ENCODE measurements at regions of chr4 and their contacts with region 1.

Region 1: DNA sequence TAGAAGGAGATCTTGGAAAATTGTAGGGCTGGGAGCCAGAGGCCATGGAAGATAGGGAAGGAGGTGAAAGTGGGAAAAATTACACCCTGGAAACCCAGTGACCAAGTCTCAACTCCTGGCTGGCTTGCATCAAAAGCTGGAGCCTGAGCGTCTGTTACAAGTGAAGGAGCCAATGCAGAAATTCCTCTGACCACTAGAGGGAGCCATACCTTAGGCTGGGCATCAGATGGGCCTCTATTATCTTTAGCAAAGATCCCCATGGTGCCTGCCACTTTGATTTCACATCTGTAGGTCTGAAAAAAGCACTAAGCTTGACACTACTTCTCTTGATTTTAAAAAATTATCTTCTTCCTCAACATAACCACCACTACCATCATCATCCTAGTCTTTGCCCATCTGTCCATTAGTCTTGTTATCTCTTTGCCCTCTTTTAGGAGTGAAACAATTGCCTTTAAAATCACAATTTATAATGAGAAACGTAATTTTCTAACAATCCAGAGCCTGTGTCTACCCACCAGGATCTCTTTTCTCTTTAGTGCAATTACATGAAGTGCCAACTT is 62.9 kb downstream of the ANAPC4 start:
- DNase-seq: peak; percentile 71
- H3K4me3 ChIP-seq: no peak overlapping the region; a peak in 1 of 4 replicates
- H3K27ac ChIP-seq: no peak overlapping the region
- H3K4me1 ChIP-seq: no peaks in the 10 kb centered on the region; a peak in 1 of 4 replicates
- H3K27me3 ChIP-seq: no peaks in the 10 kb centered on the region
- CTCF ChIP-seq: peak; percentile 91
- EP300 ChIP-seq: no peak
- RAD21 ChIP-seq: peak; percentile 69

Region 2: GRCh38 chr4:24885342-24885741 is 554.7 kb before region 1 on chr4:
- CTCF ChIA-PET with region 1: no interaction called
- POLR2A ChIA-PET with region 1: no interaction called
- DNase-seq: no peak
- H3K4me3 ChIP-seq: no peak overlapping the region
- H3K27ac ChIP-seq: no peak overlapping the region
- H3K4me1 ChIP-seq: no peaks in the 10 kb centered on the region
- H3K27me3 ChIP-seq: no peaks in the 10 kb centered on the region
- CTCF ChIP-seq: no peak
- EP300 ChIP-seq: no peak
- RAD21 ChIP-seq: no peak

Region 3: GRCh38 chr4:25406081-25406692 is 33.8 kb before region 1 on chr4:
- CTCF ChIA-PET with region 1: interaction called, 15 read pairs
- POLR2A ChIA-PET with region 1: no interaction called
- DNase-seq: no peak
- H3K4me3 ChIP-seq: no peak overlapping the region
- H3K27ac ChIP-seq: no peak overlapping the region
- H3K4me1 ChIP-seq: no peaks in the 10 kb centered on the region; a peak in 1 of 4 replicates
- H3K27me3 ChIP-seq: no peaks in the 10 kb centered on the region
- CTCF ChIP-seq: no peak
- EP300 ChIP-seq: no peak
- RAD21 ChIP-seq: no peak

Region 4: DNA sequence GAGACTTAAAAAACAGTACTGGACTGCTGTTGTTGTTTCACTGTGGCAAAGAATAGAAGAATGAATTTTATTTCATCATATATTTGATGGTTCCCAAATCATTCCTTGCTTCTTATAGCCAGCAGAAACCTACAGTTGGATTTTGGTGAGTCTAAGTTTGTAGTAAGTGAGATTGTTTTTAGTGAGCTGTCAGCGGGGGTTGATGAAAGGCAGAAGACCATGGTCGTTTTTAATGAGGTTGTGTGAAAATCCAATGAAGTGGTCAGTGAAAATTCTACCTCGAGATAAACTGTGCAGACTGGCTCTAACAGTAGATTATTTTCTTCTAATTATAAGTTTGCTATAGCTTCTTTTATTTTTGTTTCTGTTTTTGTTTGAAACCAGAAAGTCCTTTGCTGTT is 26.7 kb before region 1 on chr4:
- CTCF ChIA-PET with region 1: interaction called, 15 read pairs
- POLR2A ChIA-PET with region 1: no interaction called
- DNase-seq: no peak
- H3K4me3 ChIP-seq: no peak overlapping the region
- H3K27ac ChIP-seq: no peak overlapping the region
- H3K4me1 ChIP-seq: no peaks in the 10 kb centered on the region
- H3K27me3 ChIP-seq: no peaks in the 10 kb centered on the region
- CTCF ChIP-seq: no peak
- EP300 ChIP-seq: no peak
- RAD21 ChIP-seq: no peak

Region 5: GRCh38 chr4:25421816-25422525 is 18.0 kb before region 1 on chr4:
- CTCF ChIA-PET with region 1: interaction called, 14 read pairs
- POLR2A ChIA-PET with region 1: no interaction called
- DNase-seq: no peak
- H3K4me3 ChIP-seq: no peak overlapping the region
- H3K27ac ChIP-seq: no peak overlapping the region
- H3K4me1 ChIP-seq: peaks cover 0 to 11% of the 10 kb centered on the region in 2 experiments; a peak in 1 of 4 replicates
- H3K27me3 ChIP-seq: no peaks in the 10 kb centered on the region
- CTCF ChIP-seq: no peak
- EP300 ChIP-seq: no peak
- RAD21 ChIP-seq: no peak

Region 6: DNA sequence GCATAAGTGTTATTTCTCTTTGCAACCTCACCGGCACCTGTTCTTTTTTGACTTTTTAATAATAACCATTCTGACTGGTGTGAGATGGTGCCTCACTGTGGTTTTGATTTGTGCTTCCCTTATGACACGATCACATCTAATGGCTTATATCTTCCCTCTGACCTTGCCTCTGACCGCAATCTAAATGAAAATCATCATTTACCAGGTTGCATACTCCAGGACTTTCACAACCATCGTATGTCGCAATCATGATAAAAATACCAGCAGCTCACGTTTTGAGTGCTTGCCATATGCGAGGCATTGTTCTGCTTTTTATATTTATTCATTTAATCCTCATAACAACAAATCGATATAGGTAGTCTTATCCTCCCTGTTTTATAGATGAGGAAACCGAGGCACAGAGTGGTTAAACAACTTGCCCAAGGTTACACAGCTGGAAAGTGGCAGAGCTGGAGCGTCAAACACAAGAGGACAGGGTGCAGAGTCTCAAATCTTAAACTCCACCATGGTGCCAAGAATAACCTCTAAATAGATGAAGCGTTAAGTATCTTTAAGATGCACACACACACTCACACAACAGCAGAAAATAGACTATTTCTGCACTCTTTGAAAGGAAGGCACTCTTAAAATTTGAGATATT is 320.6 kb after region 1 on chr4:
- CTCF ChIA-PET with region 1: interaction called, 40 read pairs
- POLR2A ChIA-PET with region 1: no interaction called
- DNase-seq: no peak
- H3K4me3 ChIP-seq: no peak overlapping the region
- H3K27ac ChIP-seq: no peak overlapping the region
- H3K4me1 ChIP-seq: no peaks in the 10 kb centered on the region
- H3K27me3 ChIP-seq: no peaks in the 10 kb centered on the region
- CTCF ChIP-seq: no peak
- EP300 ChIP-seq: no peak
- RAD21 ChIP-seq: no peak

Region 7: DNA sequence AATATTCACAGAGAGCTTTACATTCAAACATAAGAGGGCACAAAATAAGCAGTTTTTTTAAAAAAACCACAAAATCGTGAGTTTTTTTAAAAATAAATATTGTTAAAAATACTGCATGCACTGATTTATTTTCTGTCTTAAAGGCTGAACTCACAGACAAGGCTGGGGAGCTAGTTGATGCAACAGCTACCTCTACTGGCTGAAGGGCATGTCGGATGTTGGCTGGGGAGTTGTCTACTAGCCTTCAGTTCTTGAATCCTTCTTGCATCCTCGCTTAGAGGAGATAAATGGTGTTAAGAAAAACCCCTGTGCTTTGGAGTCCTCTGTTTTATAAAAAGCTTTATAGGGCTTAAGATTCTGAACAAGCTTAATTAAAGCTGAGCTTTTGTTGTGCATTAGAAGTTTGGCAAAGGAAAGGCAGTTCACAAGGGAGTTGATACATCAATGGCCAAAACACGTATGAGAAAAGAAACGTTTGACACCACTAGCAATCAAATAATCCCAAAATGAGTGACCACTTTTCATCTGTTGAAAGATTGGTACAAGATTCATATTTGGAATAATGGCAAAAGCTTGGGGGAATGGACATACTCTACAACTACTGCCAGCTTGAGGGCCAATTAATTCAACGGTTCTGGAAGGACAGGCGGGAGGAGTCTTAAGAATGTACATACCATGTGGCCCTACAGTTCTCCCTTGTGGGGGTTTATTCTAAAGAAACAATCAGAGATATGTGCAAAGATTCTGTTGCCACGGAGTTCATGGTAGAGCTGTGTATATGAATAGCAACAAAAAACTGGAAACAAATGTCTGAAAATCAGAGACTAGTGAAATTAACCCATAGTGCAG is 328.1 kb after region 1 on chr4:
- CTCF ChIA-PET with region 1: interaction called, 166 read pairs
- POLR2A ChIA-PET with region 1: no interaction called
- DNase-seq: peak; percentile 73
- H3K4me3 ChIP-seq: no peak overlapping the region
- H3K27ac ChIP-seq: no peak overlapping the region
- H3K4me1 ChIP-seq: no peaks in the 10 kb centered on the region
- H3K27me3 ChIP-seq: no peaks in the 10 kb centered on the region
- CTCF ChIP-seq: peak; percentile 96
- EP300 ChIP-seq: no peak
- RAD21 ChIP-seq: peak; percentile 95

Region 8: DNA sequence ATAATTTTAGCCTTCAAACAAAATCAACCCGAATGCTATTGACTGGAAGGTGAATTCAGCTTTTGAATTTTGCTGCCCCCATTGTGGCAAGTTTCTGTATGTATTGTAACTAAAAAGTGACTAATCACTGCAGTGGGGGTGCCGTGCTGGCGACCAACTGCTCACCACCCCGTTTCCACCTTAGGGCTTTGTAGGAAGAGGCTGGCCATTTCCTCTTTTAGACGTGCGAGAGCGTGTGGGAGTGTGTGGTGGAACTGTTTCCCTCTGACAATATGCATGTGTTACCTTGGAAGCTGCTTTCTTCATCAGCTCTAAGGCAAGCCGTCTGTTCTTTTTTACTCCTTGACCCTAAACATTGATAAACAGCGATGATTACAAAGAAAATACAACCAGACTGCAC is 343.9 kb after region 1 on chr4:
- CTCF ChIA-PET with region 1: interaction called, 14 read pairs
- POLR2A ChIA-PET with region 1: no interaction called
- DNase-seq: no peak
- H3K4me3 ChIP-seq: no peak overlapping the region
- H3K27ac ChIP-seq: no peak overlapping the region
- H3K4me1 ChIP-seq: no peaks in the 10 kb centered on the region
- H3K27me3 ChIP-seq: no peaks in the 10 kb centered on the region
- CTCF ChIP-seq: no peak
- EP300 ChIP-seq: no peak
- RAD21 ChIP-seq: no peak